Activated T-helper 1 cell treated with anti-CD3 and anti-CD28 coated beads, Interleukin-12 subunit alpha, Interleukin-12 subunit beta, Interleukin-2, Interleukin-4 antibody, amounts not matched to agents 30 ng/mL and 10 ng/mL and 1 ng/mL, durations not matched to agents 14 hours and 24 hours and 36 hours (primary cell): ENCODE measurements at regions of chr3 and their contacts with region 1.

Region 1: GRCh38 chr3:46372492-46373359 is 2.0 kb downstream of the CCR5 start:
- DNase-seq: peak; percentile 31
- H3K4me3 Mint-ChIP-seq: peak overlapping the region; percentile 58
- H3K27ac Mint-ChIP-seq: peak overlapping the region; percentile 22
- H3K4me1 Mint-ChIP-seq: peaks cover 84% of the 10 kb centered on the region
- H3K27me3 Mint-ChIP-seq: peaks cover 6% of the 10 kb centered on the region

Region 2: GRCh38 chr3:45938864-45939263 is 433.9 kb before region 1 on chr3:
- intact Hi-C with region 1: loop called (anchors 1 kb)
- DNase-seq: peak; percentile 77
- H3K4me3 Mint-ChIP-seq: no peak overlapping the region
- H3K27ac Mint-ChIP-seq: peak overlapping the region; percentile 0
- H3K4me1 Mint-ChIP-seq: peaks cover 53% of the 10 kb centered on the region
- H3K27me3 Mint-ChIP-seq: no peaks in the 10 kb centered on the region

Region 3: GRCh38 chr3:46098319-46098761 is 274.4 kb before region 1 on chr3:
- intact Hi-C with region 1: loop called (anchors 1 kb)
- DNase-seq: peak; percentile 70
- H3K4me3 Mint-ChIP-seq: peak overlapping the region; percentile 71
- H3K27ac Mint-ChIP-seq: peak overlapping the region; percentile 95
- H3K4me1 Mint-ChIP-seq: peaks cover 75% of the 10 kb centered on the region
- H3K27me3 Mint-ChIP-seq: peaks cover 5% of the 10 kb centered on the region

Region 4: GRCh38 chr3:46228259-46229242 is 144.2 kb before region 1 on chr3:
- intact Hi-C with region 1: loop called (anchors 5 kb)
- DNase-seq: no peak
- H3K4me3 Mint-ChIP-seq: no peak overlapping the region
- H3K27ac Mint-ChIP-seq: no peak overlapping the region
- H3K4me1 Mint-ChIP-seq: peaks cover 18% of the 10 kb centered on the region
- H3K27me3 Mint-ChIP-seq: peaks cover 39% of the 10 kb centered on the region

Region 5: DNA sequence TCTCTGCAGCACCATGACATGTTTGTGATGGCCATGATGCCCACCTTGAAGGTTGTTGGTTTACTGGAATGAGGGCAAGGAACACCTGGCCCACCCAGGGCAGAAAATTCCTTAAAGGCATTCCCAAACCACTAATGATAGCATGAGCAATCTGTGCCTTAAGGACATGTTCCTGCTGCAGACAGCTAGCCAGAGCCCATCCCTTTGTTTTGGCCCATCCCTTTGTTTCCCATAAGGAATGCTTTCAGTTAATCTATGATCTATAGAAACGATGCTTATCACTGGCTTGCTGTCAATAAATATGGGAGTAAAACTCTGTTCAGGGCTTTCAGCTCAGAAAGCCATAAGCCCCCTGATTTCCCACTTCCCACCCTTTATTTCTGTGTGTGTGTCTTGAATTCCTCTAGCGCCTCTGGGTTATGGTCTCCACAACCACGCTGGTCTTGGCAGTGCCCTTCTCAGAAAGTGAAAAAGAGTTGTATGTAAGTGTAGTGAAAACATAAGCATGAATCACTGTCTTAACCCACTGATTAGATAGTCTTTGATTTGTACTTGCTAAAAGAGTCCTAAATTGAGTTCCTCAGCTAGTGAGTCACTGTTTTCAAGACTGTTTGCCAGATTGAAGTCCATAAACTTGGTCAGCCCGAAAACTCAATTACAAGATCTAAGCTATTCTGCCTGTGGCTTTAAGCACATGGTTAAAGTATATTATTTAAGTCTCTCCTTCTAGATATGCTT is 37.8 kb before region 1 on chr3:
- intact Hi-C with region 1: loop called (anchors 1 kb)
- DNase-seq: no peak
- H3K4me3 Mint-ChIP-seq: no peak overlapping the region
- H3K27ac Mint-ChIP-seq: peak overlapping the region; percentile 21
- H3K4me1 Mint-ChIP-seq: peaks cover 21% of the 10 kb centered on the region
- H3K27me3 Mint-ChIP-seq: peaks cover 13% of the 10 kb centered on the region

Region 6: GRCh38 chr3:46705022-46705530 is 332.4 kb after region 1 on chr3:
- intact Hi-C with region 1: no loop called
- DNase-seq: peak; percentile 53
- H3K4me3 Mint-ChIP-seq: no peak overlapping the region
- H3K27ac Mint-ChIP-seq: no peak overlapping the region
- H3K4me1 Mint-ChIP-seq: peaks cover 4% of the 10 kb centered on the region
- H3K27me3 Mint-ChIP-seq: peaks cover 15% of the 10 kb centered on the region